ENCODE measurements at regions of chr18 and their contacts with region 1.

Region 1: GRCh38 chr18:46324087-46324958 is 220.1 kb downstream of the HAUS1 start:
- DNase-seq: peak in 1 of 2 experiments; percentile 72
- H3K4me3 ChIP-seq: peak overlapping the region; percentile 36; the same call in 1 of the 2 replicates
- H3K27ac ChIP-seq: peak overlapping the region; percentile 100
- H3K4me1 ChIP-seq: peaks cover 58% of the 10 kb centered on the region
- H3K27me3 ChIP-seq: no peaks in the 10 kb centered on the region
- CTCF ChIP-seq: no peak

Region 2: GRCh38 chr18:46173393-46174341 is 150.7 kb before region 1 on chr18:
- CTCF ChIA-PET with region 1: no interaction called
- POLR2A ChIA-PET with region 1: no interaction called
- intact Hi-C with region 1: loop called (anchors 5 kb)
- DNase-seq: peak; percentile 82 to 83
- H3K4me3 ChIP-seq: peak overlapping the region; percentile 98
- H3K27ac ChIP-seq: peak overlapping the region; percentile 78
- H3K4me1 ChIP-seq: peaks cover 34% of the 10 kb centered on the region
- H3K27me3 ChIP-seq: no peaks in the 10 kb centered on the region
- CTCF ChIP-seq: peak; percentile 91

Region 3: GRCh38 chr18:46293761-46294228 is 30.5 kb before region 1 on chr18:
- CTCF ChIA-PET with region 1: interaction called, 3 read pairs
- POLR2A ChIA-PET with region 1: interaction called, 18 read pairs
- intact Hi-C with region 1: loop called (anchors 1 kb)
- DNase-seq: peak; percentile 85 to 98
- H3K4me3 ChIP-seq: peak overlapping the region; percentile 45; the same call in 1 of the 2 replicates
- H3K27ac ChIP-seq: peak overlapping the region; percentile 97
- H3K4me1 ChIP-seq: peaks cover 75% of the 10 kb centered on the region
- H3K27me3 ChIP-seq: no peaks in the 10 kb centered on the region
- CTCF ChIP-seq: no peak

Region 4: GRCh38 chr18:46443380-46443779 is 119.1 kb after region 1 on chr18:
- CTCF ChIA-PET with region 1: no interaction called
- POLR2A ChIA-PET with region 1: no interaction called
- intact Hi-C with region 1: no loop called
- DNase-seq: no peak
- H3K4me3 ChIP-seq: no peak overlapping the region
- H3K27ac ChIP-seq: no peak overlapping the region
- H3K4me1 ChIP-seq: no peaks in the 10 kb centered on the region; the same call in 1 of the 2 replicates
- H3K27me3 ChIP-seq: no peaks in the 10 kb centered on the region
- CTCF ChIP-seq: no peak

Measured in PC-9 (cell line).